Sigmoid colon (tissue), 7 donors: ENCODE measurements at regions of chr3 and their contacts with region 1.

Region 1: DNA sequence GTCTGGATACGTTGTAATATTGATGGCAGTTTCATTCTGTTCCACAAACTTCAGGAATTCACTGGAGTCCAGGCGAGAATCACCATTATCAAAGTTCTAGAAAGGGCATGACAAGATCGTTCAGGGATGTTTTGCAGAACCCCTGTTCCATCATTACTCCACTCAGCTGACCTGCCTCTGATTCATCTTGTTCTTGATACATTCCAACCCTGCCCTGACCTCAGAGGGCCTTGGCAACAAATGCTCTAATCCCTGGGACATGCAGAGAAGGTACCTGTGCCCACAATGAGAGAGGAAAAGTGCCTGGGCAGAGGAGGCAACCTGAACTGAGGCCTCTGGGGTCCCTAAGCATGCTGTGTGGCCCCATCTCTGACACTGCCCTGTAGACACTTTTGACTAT is 45.9 kb downstream of the FSTL1 start:
- DNase-seq: no peak
- H3K4me3 ChIP-seq: no peak overlapping the region
- H3K27ac ChIP-seq: peak overlapping the region in 1 of 4 donors; percentile 11
- H3K4me1 ChIP-seq: no peaks in the 10 kb centered on the region
- H3K27me3 ChIP-seq: no peaks in the 10 kb centered on the region
- CTCF ChIP-seq: no peak
- EP300 ChIP-seq: no peak
- POLR2A ChIP-seq: no peak

Region 2: GRCh38 chr3:120239644-120240043 is 165.2 kb before region 1 on chr3:
- intact Hi-C with region 1: loop called (anchors 5 kb)
- DNase-seq: no peak
- H3K4me3 ChIP-seq: no peak overlapping the region
- H3K27ac ChIP-seq: no peak overlapping the region
- H3K4me1 ChIP-seq: peaks cover 0 to 1% (median under 1%) of the 10 kb centered on the region in 4 donors
- H3K27me3 ChIP-seq: no peaks in the 10 kb centered on the region
- CTCF ChIP-seq: no peak
- EP300 ChIP-seq: no peak
- POLR2A ChIP-seq: no peak